Colonic mucosa (tissue), 4 donors: ENCODE measurements at regions of chr5 and their contacts with region 1.

Region 1: DNA sequence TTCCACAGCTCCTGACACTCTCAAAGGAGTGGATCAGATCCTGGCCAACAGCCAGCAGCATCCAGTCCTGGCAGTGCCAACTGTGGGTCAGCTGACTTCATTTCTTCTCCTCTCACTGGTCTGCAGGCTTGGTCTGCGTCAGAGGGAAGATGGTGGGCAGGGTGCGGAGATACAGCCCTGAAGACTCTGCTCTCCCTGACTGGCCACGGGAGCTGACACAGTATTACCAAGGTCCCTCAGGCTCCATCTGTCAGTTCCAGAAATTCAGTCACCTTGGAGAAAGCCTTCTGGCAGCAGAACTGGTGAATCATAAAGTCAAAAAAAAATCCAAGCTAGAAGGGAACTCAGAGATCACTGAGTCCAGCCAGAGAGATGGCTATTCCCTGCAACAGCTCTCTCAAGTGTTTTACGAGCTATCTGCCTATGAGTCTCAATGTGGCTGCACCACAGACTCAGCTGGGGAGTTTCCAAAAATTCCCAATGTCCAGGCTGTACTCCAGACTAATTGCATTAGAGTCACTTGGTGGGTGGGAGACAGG is 28.0 kb downstream of the C1QTNF2 start:
- DNase-seq: no peak
- H3K4me3 ChIP-seq: no peak overlapping the region
- H3K27ac ChIP-seq: no peak overlapping the region
- H3K4me1 ChIP-seq: no peaks in the 10 kb centered on the region
- H3K27me3 ChIP-seq: no peaks in the 10 kb centered on the region
- CTCF ChIP-seq: no peak

Region 2: DNA sequence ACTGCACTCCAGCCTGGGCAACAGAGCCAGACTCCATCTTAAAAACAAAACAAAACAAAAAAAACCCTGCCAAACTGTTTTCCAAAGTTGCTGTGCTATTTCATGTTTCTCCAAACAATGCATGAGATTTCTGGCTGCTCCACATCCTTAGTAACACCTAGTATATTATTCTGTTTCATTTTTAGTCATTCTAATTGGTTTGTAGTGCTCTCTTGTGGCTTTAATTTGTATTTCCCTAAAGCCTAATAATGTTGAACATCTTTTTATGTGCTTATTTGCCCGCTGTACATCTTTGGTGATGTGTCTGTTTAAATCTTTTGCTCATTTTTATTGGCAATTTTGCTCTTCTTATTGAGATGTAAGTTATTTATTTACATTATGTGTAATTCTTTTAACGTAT is 352.0 kb before region 1 on chr5:
- intact Hi-C with region 1: no loop called
- DNase-seq: no peak
- H3K4me3 ChIP-seq: no peak overlapping the region
- H3K27ac ChIP-seq: no peak overlapping the region
- H3K4me1 ChIP-seq: no peaks in the 10 kb centered on the region
- H3K27me3 ChIP-seq: no peaks in the 10 kb centered on the region
- CTCF ChIP-seq: no peak

Region 3: DNA sequence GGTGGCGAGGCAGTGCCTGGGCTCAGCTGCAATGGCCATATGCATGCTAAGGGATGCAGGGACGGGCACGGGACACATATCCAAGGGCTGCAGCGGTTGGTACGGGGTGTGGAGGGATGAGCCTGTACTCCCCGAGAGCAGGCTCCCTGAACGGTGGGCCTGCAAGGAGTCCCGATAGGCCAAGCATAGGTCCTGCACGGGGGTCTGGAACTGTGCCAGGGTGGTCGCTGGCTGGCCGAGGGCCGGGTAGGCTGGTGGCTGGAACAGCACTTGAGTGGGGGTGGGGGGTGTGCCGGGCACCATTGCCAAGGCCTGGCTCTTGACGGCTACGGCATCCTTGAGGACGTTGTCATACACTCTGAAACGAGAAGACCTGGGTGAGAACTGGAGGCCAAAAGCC is 89.0 kb before region 1 on chr5:
- intact Hi-C with region 1: loop called (anchors 5 kb)
- DNase-seq: no peak
- H3K4me3 ChIP-seq: no peak overlapping the region
- H3K27ac ChIP-seq: no peak overlapping the region
- H3K4me1 ChIP-seq: peaks cover 5% of the 10 kb centered on the region
- H3K27me3 ChIP-seq: no peaks in the 10 kb centered on the region
- CTCF ChIP-seq: no peak

Region 4: GRCh38 chr5:160467555-160468362 is 125.3 kb after region 1 on chr5:
- intact Hi-C with region 1: no loop called
- DNase-seq: peak; percentile 89
- H3K4me3 ChIP-seq: peak overlapping the region; percentile 30
- H3K27ac ChIP-seq: peak overlapping the region; percentile 73
- H3K4me1 ChIP-seq: peaks cover 11% of the 10 kb centered on the region
- H3K27me3 ChIP-seq: no peaks in the 10 kb centered on the region
- CTCF ChIP-seq: no peak